ENCODE measurements at regions of chr9 and their contacts with region 1.

Region 1: GRCh38 chr9:124812401-124813016 is 35.6 kb downstream of the OLFML2A start:
- DNase-seq: peak in 1 of 2 experiments; percentile 64
- H3K4me3 ChIP-seq: no peak overlapping the region
- H3K27ac ChIP-seq: no peak overlapping the region
- H3K4me1 ChIP-seq: peaks cover 10 to 24% (median 16%) of the 10 kb centered on the region in 4 experiments
- H3K27me3 ChIP-seq: no peaks in the 10 kb centered on the region
- CTCF ChIP-seq: no peak
- EP300 ChIP-seq: no peak
- POLR2A ChIP-seq: no peak
- RAD21 ChIP-seq: no peak

Region 2: DNA sequence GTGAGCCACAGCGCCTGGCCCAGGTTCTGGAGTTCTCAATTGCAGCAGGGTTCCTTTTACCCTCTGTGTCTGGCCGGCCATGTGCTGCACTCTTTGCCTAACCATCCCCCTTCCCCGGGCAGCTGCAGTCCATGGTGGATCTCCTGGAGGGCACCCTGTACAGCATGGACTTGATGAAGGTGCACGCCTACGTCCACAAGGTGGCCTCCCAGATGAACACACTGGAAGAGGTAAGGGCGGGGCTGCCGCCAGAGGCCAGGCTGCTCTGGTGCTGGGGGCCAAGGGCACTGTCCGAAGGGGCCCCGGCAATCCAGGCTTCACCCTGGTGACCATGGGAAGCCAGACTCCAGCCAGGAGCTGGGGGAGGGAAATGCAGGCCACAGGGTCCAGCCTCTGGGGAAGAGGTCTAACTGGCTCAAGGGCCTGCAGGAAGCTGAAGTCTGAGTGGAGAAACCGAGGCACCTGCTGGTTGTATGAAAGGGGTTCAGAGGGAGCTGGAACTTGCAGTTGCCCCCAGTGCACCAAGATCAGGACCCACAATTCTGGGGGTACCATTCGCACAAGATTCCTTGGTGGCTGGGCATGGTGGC is 17.5 kb before region 1 on chr9:
- CTCF ChIA-PET with region 1: interaction called, 45 read pairs
- POLR2A ChIA-PET with region 1: interaction called, 18 read pairs
- DNase-seq: no peak
- H3K4me3 ChIP-seq: no peak overlapping the region
- H3K27ac ChIP-seq: no peak overlapping the region
- H3K4me1 ChIP-seq: peaks cover 0 to 12% (median 0%) of the 10 kb centered on the region in 4 experiments; a peak in 3 of 7 replicates
- H3K27me3 ChIP-seq: no peaks in the 10 kb centered on the region
- CTCF ChIP-seq: peak; percentile 13 to 27 (median 16); a peak in 3 of 4 replicates
- EP300 ChIP-seq: no peak
- POLR2A ChIP-seq: no peak
- RAD21 ChIP-seq: peak in 1 of 2 experiments; percentile 30; a peak in 1 of 4 replicates

Measured in H1 (cell line).